Activated naive CD4-positive, alpha-beta T cell treated with anti-CD3 and anti-CD28 coated beads, Interleukin-2, amount 10 ng/mL, durations not matched to agents 7 days and 5 days (primary cell): ENCODE measurements at regions of chr15 and their contacts with region 1.

Region 1: DNA sequence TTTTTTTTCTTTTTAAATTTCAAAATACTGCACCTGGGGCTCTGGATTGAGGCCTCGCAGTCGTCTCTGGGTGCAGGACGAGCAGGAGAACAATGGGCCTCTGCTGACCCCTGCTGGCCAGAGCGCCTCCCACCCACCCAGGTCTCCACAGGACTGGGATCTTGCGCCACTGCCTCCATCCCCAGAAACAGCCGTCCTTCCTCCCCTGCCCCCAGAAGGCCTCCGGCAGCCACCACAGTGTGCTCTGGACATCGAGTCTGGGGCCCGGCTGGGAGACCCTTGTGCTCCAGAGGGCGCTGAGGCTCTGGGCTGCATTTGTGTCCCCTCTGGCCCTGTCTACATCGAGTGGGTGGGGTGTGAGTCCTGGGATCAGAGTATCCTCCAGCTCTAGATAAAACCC is 6.6 kb upstream of the ACSBG1 start:
- DNase-seq: peak; percentile 90
- H3K4me3 Mint-ChIP-seq: no peak overlapping the region
- H3K27ac Mint-ChIP-seq: no peak overlapping the region
- H3K4me1 Mint-ChIP-seq: peaks cover 3% of the 10 kb centered on the region
- H3K27me3 Mint-ChIP-seq: peaks cover 52% of the 10 kb centered on the region

Region 2: DNA sequence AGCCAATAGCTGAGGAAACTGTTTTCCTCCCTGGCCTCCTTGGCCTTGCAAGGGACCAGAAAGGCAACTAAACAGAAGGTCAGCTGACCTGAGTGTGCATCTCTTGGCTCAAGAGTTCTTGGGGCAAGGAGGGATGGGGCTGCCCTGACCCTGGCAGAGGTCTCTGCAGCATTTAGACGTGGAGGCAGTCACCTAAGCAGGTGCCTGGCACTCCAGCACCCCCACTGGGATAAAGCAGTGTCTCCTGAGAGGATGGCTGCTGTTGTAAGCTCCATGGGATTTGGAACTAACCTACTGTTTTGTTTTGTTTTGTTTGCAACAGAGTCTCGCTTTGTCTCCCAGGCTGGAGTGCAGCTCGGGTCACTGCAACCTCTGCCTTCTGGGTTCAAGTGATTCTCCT is 348.7 kb before region 1 on chr15:
- CTCF ChIA-PET with region 1: no interaction called
- DNase-seq: no peak
- H3K4me3 Mint-ChIP-seq: no peak overlapping the region
- H3K27ac Mint-ChIP-seq: no peak overlapping the region
- H3K4me1 Mint-ChIP-seq: no peaks in the 10 kb centered on the region
- H3K27me3 Mint-ChIP-seq: peaks cover 55% of the 10 kb centered on the region

Region 3: GRCh38 chr15:78167227-78167888 is 73.6 kb before region 1 on chr15:
- CTCF ChIA-PET with region 1: no interaction called
- DNase-seq: peak; percentile 61
- H3K4me3 Mint-ChIP-seq: peak overlapping the region; percentile 8
- H3K27ac Mint-ChIP-seq: peak overlapping the region; percentile 72
- H3K4me1 Mint-ChIP-seq: peaks cover 41% of the 10 kb centered on the region
- H3K27me3 Mint-ChIP-seq: no peaks in the 10 kb centered on the region

Region 4: DNA sequence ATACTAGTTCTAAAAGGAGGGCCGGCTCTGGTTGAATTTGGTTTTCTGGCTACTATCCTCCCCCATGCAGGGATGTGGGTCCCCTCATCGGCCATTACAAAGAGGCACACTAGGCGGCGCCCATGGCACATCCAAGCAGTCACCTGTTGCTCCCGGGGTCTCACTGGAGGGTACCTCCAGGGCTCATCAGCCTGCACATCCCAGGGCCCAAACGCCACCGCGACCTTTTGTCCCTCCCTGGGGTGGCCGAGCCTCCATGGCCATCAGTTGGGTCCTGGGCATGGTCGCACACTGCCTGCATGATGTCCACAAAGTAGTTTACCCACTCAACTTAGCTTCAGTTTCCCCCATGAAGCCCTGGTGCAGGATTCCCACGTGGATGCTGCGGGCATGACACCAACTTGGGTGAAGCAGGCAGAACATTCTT is 63.5 kb before region 1 on chr15:
- CTCF ChIA-PET with region 1: interaction called, 12 read pairs
- DNase-seq: peak; percentile 57
- H3K4me3 Mint-ChIP-seq: no peak overlapping the region
- H3K27ac Mint-ChIP-seq: no peak overlapping the region
- H3K4me1 Mint-ChIP-seq: peaks cover 25% of the 10 kb centered on the region
- H3K27me3 Mint-ChIP-seq: peaks cover 18% of the 10 kb centered on the region